ENCODE measurements at regions of chr1 and their contacts with region 1.

Region 1: GRCh38 chr1:165914136-165914798 is 86.9 kb downstream of the UCK2 start:
- DNase-seq: peak in 2 of 5 donors; percentile 50 to 65
- ATAC-seq: peak; percentile 53 to 86 (median 78)
- H3K4me3 ChIP-seq: no peak overlapping the region
- H3K27ac ChIP-seq: no peak overlapping the region
- H3K4me1 ChIP-seq: peaks cover 0 to 20% (median 10%) of the 10 kb centered on the region in 12 donors
- H3K27me3 ChIP-seq: no peaks in the 10 kb centered on the region
- CTCF ChIP-seq: peak; percentile 75 to 94 (median 84)
- POLR2A ChIP-seq: no peak

Region 2: GRCh38 chr1:165397944-165398343 is 516.3 kb before region 1 on chr1:
- intact Hi-C with region 1: loop called (anchors 5 to 10 kb)
- DNase-seq: peak in 4 of 5 donors; percentile 49 to 55 (median 54)
- ATAC-seq: peak; percentile 40 to 93 (median 78)
- H3K4me3 ChIP-seq: no peak overlapping the region
- H3K27ac ChIP-seq: peak overlapping the region in 8 of 12 donors; percentile 9 to 59 (median 32)
- H3K4me1 ChIP-seq: peaks cover 0 to 21% (median 9%) of the 10 kb centered on the region in 12 donors
- H3K27me3 ChIP-seq: peaks cover 0 to 34% (median 0%) of the 10 kb centered on the region in 9 donors
- CTCF ChIP-seq: no peak
- POLR2A ChIP-seq: no peak

Region 3: DNA sequence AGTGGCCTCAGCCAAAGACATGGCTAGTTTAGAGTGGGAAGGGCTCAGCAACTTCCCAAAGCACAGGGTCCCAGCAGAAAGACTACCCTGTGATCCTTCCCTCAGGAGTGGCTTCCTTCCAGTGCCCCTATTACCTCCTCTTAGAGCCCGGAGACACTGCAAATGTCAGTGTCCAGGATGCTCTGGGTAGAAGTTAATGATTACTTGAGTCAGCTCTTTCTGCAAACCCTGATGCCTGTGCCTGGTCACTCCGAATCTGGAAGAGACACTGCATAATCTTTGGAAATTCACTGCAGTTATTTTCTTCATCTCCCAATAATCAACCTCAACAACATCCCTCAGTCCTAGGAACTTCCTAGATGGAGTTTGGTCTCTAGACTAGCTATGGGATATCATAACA is 310.5 kb before region 1 on chr1:
- intact Hi-C with region 1: loop called (anchors 1 to 10 kb)
- DNase-seq: no peak
- ATAC-seq: no peak
- H3K4me3 ChIP-seq: no peak overlapping the region
- H3K27ac ChIP-seq: no peak overlapping the region
- H3K4me1 ChIP-seq: peaks cover 0 to 14% (median 0%) of the 10 kb centered on the region in 12 donors
- H3K27me3 ChIP-seq: no peaks in the 10 kb centered on the region
- CTCF ChIP-seq: no peak
- POLR2A ChIP-seq: no peak

Region 4: DNA sequence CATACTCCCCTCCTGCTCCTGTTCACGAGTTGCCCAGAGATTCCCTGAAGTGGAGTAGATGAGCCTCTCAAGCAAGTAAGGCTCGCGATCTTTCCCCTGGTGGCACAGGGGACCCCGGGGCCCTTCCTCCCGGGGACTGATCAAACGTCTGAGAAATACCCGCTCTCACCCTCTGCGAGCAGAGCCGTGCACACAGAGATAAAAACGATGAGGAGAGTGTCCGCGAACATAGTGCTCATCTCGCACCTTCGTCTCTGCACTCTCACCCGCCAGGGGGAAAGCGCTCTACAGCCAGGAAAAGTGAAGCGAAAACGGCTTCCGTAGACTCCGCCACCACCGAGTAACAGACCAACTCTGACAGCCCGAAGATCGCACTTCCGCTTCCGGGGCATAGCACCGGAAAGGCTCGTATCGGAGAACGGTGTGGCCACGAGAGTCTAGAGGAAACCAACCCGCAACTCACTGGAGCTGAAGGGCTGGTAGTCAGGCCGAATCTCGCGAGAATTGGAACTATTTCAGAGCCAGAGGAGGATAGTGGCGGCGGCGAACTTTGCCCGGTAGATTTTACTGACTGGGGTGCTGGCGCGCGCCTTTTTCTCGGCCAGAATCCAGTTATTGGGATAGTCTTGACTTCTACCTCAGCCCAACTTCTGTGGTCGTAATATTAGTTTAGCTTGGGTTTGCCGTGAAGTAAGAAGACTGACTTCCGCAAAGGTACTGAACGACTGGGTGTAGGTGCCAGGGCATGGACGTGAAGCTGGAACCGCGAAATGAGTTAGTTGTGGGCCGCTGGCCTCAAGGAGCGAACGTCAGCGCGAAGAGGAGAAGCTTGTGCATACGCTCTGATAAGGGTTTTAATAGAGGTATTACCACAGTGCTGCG is 145.5 kb before region 1 on chr1 and contains the start of gene TMCO1:
- intact Hi-C with region 1: loop called in 3 of 10 experiments (anchors 5 to 10 kb)
- DNase-seq: peak; percentile 94 to 97 (median 96)
- ATAC-seq: peak; percentile 100
- H3K4me3 ChIP-seq: peak within 1 kb of the TSS; percentile 52 to 88 (median 76)
- H3K27ac ChIP-seq: peak within 1 kb of the TSS; percentile 64 to 94 (median 87)
- H3K4me1 ChIP-seq: peaks cover 5 to 46% (median 31%) of the 10 kb centered on the region in 12 donors
- H3K27me3 ChIP-seq: no peaks in the 10 kb centered on the region
- CTCF ChIP-seq: peak in 4 of 12 donors; percentile 12 to 39 (median 30)
- POLR2A ChIP-seq: peak in 1 of 2 donors; percentile 68
- total RNA-seq, gene TMCO1: 33.2 to 66.6 (median 54.3) TPM

Measured in heart left ventricle (tissue), 16 donors.